ENCODE measurements at regions of chr11 and their contacts with region 1.

Region 1: GRCh38 chr11:69918938-69919650 is 99.9 kb upstream of the FGF3 start:
- DNase-seq: peak; percentile 33 to 68 (median 50)
- H3K4me3 ChIP-seq: no peak overlapping the region
- H3K4me3 Mint-ChIP-seq: no peak overlapping the region
- H3K27ac ChIP-seq: no peak overlapping the region
- H3K27ac Mint-ChIP-seq: no peak overlapping the region
- H3K4me1 ChIP-seq: no peaks in the 10 kb centered on the region
- H3K4me1 Mint-ChIP-seq: peaks cover 0 to 4% (median 1%) of the 10 kb centered on the region in 3 donors
- H3K27me3 ChIP-seq: peaks cover 9% of the 10 kb centered on the region
- H3K27me3 Mint-ChIP-seq: peaks cover 20 to 36% of the 10 kb centered on the region in 2 donors

Region 2: DNA sequence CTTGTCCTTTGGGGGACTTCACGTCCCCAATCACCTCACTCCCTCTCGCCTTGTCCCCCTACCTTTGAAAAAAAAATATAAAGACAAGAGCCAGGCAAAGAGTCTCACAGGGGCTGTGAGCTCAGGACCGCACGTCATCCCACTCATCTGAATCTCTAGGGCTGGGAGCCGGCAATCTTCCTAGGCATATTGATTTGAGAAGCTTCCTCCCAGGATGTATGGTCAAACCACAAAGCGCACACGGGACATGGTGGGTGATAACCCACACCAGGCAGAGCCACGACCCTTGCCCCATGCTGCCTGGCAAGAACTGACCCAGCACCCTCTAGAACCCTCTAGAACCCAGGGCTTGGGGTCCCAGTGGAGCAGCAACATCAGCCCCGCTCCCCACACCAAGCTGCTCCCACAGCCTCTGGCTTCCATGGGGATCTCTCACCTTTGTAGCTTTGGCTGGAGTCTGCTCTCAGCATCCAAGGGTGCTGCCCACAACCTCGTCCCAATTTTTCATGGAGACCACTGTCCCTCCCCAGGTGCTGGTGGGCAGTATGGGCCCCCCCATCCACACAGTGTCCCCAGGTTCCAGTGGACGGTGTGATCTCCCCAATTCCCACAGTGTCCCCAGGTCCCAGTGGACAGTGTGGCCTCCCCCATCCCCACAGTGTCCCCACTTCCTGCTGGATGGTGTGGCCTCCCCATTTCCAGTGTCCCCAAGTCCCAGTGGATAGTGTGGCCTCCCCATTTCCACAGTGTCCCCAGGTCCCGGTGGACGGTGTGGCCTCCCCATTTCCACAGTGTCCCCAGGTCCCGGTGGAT is 14.7 kb before region 1 on chr11:
- CTCF ChIA-PET with region 1: no interaction called
- POLR2A ChIA-PET with region 1: no interaction called
- DNase-seq: no peak
- H3K4me3 ChIP-seq: no peak overlapping the region
- H3K4me3 Mint-ChIP-seq: no peak overlapping the region
- H3K27ac ChIP-seq: no peak overlapping the region
- H3K27ac Mint-ChIP-seq: no peak overlapping the region
- H3K4me1 ChIP-seq: no peaks in the 10 kb centered on the region
- H3K4me1 Mint-ChIP-seq: no peaks in the 10 kb centered on the region
- H3K27me3 ChIP-seq: no peaks in the 10 kb centered on the region
- H3K27me3 Mint-ChIP-seq: peaks cover 16% of the 10 kb centered on the region in 2 donors

Region 3: DNA sequence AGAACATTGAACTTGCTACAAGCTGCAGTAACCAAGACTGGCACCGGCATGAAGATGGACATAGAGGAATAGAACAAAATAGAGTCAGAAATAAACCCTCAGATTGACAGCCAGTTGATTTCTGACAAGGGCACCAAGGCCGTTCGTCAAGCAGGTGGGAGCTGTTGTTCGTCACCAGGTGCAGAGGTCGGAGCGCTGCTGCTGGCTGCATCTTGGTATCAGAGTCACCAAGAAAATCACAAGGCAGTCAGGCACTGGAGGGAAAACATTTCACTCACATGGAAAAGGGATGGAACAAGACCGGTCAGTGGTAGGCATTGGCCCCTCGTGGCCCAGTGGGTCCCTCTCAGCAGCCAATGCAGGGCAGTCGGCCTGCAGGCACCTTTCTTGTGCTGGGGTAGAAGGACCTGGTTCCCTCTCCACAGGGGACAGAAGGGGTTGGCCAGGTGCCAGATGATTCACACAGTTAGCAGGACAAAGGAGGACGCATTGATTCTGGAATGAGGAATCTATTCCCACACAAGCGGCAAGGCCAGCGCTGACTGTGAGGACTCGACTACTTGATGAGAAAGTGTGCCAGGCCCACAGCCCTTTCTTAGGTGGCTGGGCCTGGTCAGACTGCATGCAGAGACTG is 15.9 kb after region 1 on chr11:
- CTCF ChIA-PET with region 1: no interaction called
- POLR2A ChIA-PET with region 1: no interaction called
- DNase-seq: peak in 1 of 5 donors; percentile 8
- H3K4me3 ChIP-seq: no peak overlapping the region
- H3K4me3 Mint-ChIP-seq: no peak overlapping the region
- H3K27ac ChIP-seq: no peak overlapping the region
- H3K27ac Mint-ChIP-seq: no peak overlapping the region
- H3K4me1 ChIP-seq: no peaks in the 10 kb centered on the region
- H3K4me1 Mint-ChIP-seq: no peaks in the 10 kb centered on the region
- H3K27me3 ChIP-seq: no peaks in the 10 kb centered on the region
- H3K27me3 Mint-ChIP-seq: peaks cover 6 to 23% of the 10 kb centered on the region in 2 donors

Region 4: GRCh38 chr11:69948256-69949141 is 29.4 kb after region 1 on chr11:
- CTCF ChIA-PET with region 1: no interaction called
- POLR2A ChIA-PET with region 1: no interaction called
- DNase-seq: no peak
- H3K4me3 ChIP-seq: no peak overlapping the region
- H3K4me3 Mint-ChIP-seq: no peak overlapping the region
- H3K27ac ChIP-seq: peak overlapping the region; percentile 47
- H3K27ac Mint-ChIP-seq: no peak overlapping the region
- H3K4me1 ChIP-seq: no peaks in the 10 kb centered on the region
- H3K4me1 Mint-ChIP-seq: no peaks in the 10 kb centered on the region
- H3K27me3 ChIP-seq: peaks cover 4% of the 10 kb centered on the region
- H3K27me3 Mint-ChIP-seq: peaks cover 9 to 25% of the 10 kb centered on the region in 2 donors

Region 5: DNA sequence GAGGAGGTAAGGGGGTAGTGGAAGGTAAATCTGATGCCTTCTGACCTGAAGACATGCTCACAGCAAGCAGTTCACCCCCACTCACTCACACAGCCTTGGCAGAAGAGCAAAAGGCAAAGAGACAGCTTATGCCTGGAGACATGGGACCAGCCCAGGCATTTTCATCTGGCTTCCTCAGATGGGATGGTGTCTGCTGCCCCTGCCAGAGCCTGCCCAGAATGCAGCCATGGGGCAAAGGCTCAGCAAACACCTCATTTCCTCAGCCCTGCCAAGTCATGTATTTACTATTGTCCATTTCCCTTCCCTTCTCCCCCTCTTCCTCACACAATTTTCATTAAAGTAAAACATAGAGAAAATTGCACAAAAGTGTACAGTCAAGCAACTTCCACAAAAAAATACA is 276.3 kb after region 1 on chr11:
- CTCF ChIA-PET with region 1: interaction called, 13 read pairs
- POLR2A ChIA-PET with region 1: no interaction called
- DNase-seq: no peak
- H3K4me3 ChIP-seq: no peak overlapping the region
- H3K4me3 Mint-ChIP-seq: no peak overlapping the region
- H3K27ac ChIP-seq: no peak overlapping the region
- H3K27ac Mint-ChIP-seq: no peak overlapping the region
- H3K4me1 ChIP-seq: no peaks in the 10 kb centered on the region
- H3K4me1 Mint-ChIP-seq: peaks cover 0 to 4% (median 0%) of the 10 kb centered on the region in 3 donors
- H3K27me3 ChIP-seq: no peaks in the 10 kb centered on the region
- H3K27me3 Mint-ChIP-seq: peaks cover 4 to 13% of the 10 kb centered on the region in 2 donors